ENCODE measurements at regions of chr12 and their contacts with region 1.

Region 1: GRCh38 chr12:19739183-19739776 is 300.0 kb downstream of the AEBP2 start:
- DNase-seq: peak; percentile 60
- H3K4me3 ChIP-seq: no peak overlapping the region
- H3K27ac ChIP-seq: no peak overlapping the region
- H3K4me1 ChIP-seq: no peaks in the 10 kb centered on the region
- H3K27me3 ChIP-seq: no peaks in the 10 kb centered on the region
- CTCF ChIP-seq: peak; percentile 51

Region 2: DNA sequence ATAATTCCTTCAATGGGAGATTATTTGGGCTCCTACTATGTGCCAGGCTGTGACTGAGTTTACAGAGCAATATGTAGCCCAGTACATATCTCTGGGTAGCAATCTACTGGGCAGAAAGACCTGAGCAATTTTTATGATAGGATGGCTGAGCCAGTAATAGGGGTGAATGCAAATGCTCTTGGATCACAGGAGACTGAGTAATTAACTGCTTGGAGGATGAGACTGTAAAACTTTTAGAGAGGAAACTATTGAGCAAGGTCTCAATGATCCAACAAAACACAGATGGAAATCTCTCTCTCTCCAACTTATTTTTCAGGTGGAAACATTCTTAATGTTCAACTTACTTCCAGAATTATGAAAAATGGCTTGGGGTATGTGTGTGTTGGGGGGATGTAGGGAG is 102.2 kb after region 1 on chr12:
- intact Hi-C with region 1: no loop called
- DNase-seq: no peak
- H3K4me3 ChIP-seq: no peak overlapping the region
- H3K27ac ChIP-seq: no peak overlapping the region
- H3K4me1 ChIP-seq: no peaks in the 10 kb centered on the region
- H3K27me3 ChIP-seq: no peaks in the 10 kb centered on the region
- CTCF ChIP-seq: no peak

Region 3: DNA sequence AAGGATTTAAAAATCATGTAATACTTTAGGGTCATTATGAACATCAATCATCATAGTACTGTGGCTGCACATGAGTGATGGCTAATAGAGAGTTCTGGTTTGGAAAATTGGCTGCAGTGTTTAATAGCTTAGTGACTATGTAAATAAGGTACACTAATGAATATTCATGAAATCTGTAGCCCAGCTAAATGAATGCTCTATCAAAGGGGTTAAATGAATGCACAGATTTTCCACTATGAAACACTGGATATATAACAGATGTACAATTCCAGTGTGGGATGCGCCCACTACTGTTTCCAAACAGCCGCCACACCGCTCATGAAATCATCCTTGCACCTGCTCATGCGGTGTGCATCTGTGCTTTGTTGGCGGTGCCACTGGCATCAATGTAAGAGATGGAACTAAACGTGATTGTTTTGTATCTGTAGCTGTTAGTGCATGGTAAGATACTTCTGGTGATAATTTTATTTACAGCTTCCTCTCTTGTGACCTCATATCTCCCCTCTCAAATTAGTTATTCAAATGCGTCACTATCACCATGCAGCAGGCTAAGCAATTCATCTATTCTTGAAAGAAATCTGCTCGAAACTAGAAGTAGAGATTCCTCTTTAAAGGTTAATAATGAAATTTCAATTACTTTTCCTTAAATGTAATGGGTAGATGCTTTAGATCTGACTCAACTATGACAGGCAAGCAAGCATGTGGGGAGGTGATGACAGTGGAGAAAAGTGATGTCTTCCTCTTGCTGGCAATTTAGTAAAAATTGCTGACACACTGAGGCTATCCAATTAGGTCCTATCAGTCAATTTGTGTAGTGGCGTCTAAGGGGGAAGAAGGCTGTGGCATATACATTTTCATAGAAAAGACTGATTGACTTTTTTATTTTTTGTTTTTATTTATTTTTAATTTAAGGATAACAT is 133.6 kb after region 1 on chr12:
- intact Hi-C with region 1: no loop called
- DNase-seq: no peak
- H3K4me3 ChIP-seq: no peak overlapping the region
- H3K27ac ChIP-seq: no peak overlapping the region
- H3K4me1 ChIP-seq: no peaks in the 10 kb centered on the region
- H3K27me3 ChIP-seq: no peaks in the 10 kb centered on the region
- CTCF ChIP-seq: no peak

Region 4: DNA sequence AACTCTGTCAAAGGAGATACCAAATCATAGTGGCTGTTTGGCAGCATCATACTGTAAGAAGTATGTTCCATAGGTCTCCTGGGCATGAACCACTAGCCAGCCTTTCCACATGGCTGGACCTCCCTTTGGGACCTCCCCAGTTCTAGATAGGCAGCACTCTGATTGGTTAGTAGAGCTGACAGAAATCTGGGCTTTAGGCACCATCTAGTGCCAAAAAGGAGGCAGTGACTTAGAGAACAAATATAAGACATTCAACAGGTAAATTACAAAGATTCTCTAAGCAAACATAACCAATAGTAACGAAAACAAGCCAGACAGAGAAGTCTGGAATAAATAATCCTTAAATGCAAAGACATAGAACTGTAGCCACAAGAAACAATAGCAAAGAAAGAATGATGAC is 481.1 kb after region 1 on chr12:
- intact Hi-C with region 1: loop called (anchors 5 kb)
- DNase-seq: no peak
- H3K4me3 ChIP-seq: no peak overlapping the region
- H3K27ac ChIP-seq: no peak overlapping the region
- H3K4me1 ChIP-seq: no peaks in the 10 kb centered on the region
- H3K27me3 ChIP-seq: no peaks in the 10 kb centered on the region
- CTCF ChIP-seq: peak; percentile 24